ENCODE measurements at regions of chr5 and their contacts with region 1.

Region 1: GRCh38 chr5:171484460-171484899 is 65.0 kb downstream of the FGF18 start:
- DNase-seq: peak; percentile 10
- ATAC-seq: peak; percentile 92
- H3K4me3 ChIP-seq: no peak overlapping the region
- H3K27ac ChIP-seq: no peak overlapping the region
- H3K4me1 ChIP-seq: peaks cover 0 to 6% of the 10 kb centered on the region in 2 experiments; a peak in 1 of 4 replicates
- H3K27me3 ChIP-seq: no peaks in the 10 kb centered on the region
- CTCF ChIP-seq: peak; percentile 83 to 99 (median 88)
- POLR2A ChIP-seq: no peak
- RAD21 ChIP-seq: peak; percentile 77

Region 2: GRCh38 chr5:171462928-171463862 is 21.3 kb before region 1 on chr5:
- CTCF ChIA-PET with region 1: interaction called, 4 read pairs
- POLR2A ChIA-PET with region 1: no interaction called
- RAD21 ChIA-PET with region 1: no interaction called
- intact Hi-C with region 1: loop called (anchors 1 kb)
- DNase-seq: peak; percentile 29
- ATAC-seq: no peak
- H3K4me3 ChIP-seq: no peak overlapping the region
- H3K27ac ChIP-seq: no peak overlapping the region
- H3K4me1 ChIP-seq: no peaks in the 10 kb centered on the region
- H3K27me3 ChIP-seq: no peaks in the 10 kb centered on the region
- CTCF ChIP-seq: no peak
- POLR2A ChIP-seq: no peak
- RAD21 ChIP-seq: no peak

Region 3: DNA sequence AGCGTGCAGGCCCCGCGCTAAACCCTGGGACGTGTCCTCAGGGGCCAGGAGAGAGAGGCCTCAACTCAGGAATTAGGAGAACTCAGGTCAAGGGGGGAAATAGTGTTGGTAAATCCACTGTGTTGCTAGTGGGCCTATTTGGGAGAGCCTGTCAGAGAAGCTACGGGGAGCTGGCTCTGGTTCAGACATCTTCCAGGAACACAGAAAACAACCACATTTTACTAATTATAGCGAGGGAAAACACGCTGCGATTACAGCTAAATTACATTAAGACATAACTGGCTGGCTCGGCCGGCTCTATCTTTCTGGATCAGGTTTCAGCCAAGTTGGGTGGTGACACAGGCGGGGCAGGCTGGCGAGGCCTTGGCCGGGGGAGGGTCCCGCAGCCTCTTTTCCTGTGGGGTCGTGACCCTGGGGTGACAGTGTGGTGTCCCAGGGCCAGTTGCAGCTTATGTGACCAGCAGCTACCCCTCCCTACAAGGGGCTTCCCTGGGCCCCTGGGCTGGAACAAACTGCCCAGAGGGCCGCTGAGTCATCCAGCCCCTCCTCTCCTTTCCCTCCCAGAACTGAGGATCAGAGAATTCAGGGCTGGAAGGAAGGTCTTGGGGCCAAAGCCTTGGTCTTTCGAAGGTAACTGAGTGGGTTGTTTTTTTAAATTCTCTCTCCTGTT is 10.1 kb after region 1 on chr5:
- CTCF ChIA-PET with region 1: interaction called, 21 read pairs
- POLR2A ChIA-PET with region 1: no interaction called
- RAD21 ChIA-PET with region 1: no interaction called
- intact Hi-C with region 1: no loop called
- DNase-seq: peak; percentile 52
- ATAC-seq: peak; percentile 76
- H3K4me3 ChIP-seq: peak overlapping the region; percentile 17 to 31
- H3K27ac ChIP-seq: peak overlapping the region; percentile 96
- H3K4me1 ChIP-seq: peaks cover 29 to 52% of the 10 kb centered on the region in 2 experiments
- H3K27me3 ChIP-seq: no peaks in the 10 kb centered on the region
- CTCF ChIP-seq: no peak
- POLR2A ChIP-seq: no peak
- RAD21 ChIP-seq: no peak

Region 4: DNA sequence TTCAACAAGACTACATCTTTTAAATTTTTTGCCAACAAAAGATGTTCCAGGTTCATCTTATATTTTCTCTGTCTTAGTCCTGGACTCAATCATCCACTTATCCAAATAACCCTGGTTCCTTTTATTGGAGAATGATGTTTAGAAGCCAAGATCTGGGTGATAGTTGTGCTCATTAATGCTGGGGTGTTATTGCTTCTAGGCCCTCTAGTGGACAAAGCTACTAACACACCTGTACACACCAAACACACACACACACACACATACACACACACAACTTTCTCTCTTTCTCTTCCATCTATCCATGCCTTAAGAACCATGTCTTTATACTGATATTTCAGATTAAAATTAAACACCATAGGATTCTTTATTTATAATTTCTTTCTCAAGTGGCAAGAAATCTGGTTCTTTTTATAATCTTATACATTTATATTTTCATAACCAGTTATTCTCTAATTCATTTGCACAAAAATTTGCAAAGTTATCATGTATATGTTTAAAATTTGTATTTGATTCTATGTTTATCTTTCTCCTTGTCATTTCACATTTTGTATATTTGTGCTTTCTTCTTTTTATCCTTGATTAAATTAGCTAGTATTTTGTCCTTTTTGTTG is 122.0 kb after region 1 on chr5:
- CTCF ChIA-PET with region 1: interaction called, 8 read pairs
- POLR2A ChIA-PET with region 1: no interaction called
- RAD21 ChIA-PET with region 1: interaction called in 1 of 2 experiments, 5 read pairs
- intact Hi-C with region 1: loop called (anchors 1 kb)
- DNase-seq: peak; percentile 67
- ATAC-seq: peak; percentile 90
- H3K4me3 ChIP-seq: no peak overlapping the region
- H3K27ac ChIP-seq: no peak overlapping the region
- H3K4me1 ChIP-seq: no peaks in the 10 kb centered on the region
- H3K27me3 ChIP-seq: no peaks in the 10 kb centered on the region
- CTCF ChIP-seq: peak; percentile 80 to 86 (median 84)
- POLR2A ChIP-seq: no peak
- RAD21 ChIP-seq: peak; percentile 82

Measured in HCT116 (cell line).